ENCODE measurements at regions of chr12 and their contacts with region 1.

Region 1: DNA sequence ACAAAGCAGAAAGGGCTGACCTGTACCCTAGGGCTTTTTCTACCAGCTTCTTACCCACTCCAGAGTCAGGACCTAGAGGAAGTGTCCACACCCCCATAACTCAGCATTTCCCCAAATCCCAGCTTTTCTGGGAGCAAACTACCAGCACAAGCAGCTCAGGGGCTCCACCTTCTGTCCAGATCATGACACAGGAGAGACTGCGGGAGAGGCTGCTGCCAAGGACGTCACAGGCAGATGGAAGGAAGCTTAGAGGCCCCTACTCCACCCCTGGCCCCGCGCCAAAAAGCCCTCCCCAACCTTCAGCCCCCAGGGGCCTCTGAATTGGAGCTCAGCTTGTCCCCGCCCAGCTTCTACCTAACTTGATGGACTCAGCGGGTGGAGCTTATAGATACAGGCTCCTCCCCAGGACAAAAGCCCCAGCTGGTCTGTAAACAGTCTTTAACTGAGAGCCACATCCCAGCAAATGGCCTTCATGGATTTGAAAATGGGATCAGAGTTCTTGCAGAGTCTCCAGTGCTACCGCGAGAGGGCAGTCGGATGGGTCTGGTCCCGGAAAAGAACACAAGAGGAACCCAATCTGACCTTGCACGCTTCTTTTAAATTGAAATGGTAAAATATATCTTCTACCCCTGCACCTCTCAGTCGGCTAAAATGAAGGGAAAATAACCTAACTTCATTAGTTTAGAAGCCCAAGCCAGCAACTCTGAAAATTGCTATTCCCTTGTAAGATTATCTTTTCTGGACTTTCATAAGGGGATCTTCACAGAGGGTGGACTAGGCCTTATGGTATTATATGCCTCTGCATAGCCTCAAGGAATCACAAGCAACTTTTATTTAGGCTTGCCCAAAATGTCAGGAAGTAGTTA is 6.8 kb upstream of the BAZ2A start:
- DNase-seq: peak; percentile 95 to 98 (median 97)
- H3K4me3 ChIP-seq: peak overlapping the region; percentile 91
- H3K4me3 Mint-ChIP-seq: peak overlapping the region; percentile 91 to 99 (median 94)
- H3K27ac ChIP-seq: peak overlapping the region; percentile 89
- H3K27ac Mint-ChIP-seq: peak overlapping the region; percentile 94 to 100 (median 98)
- H3K4me1 ChIP-seq: peaks cover 51% of the 10 kb centered on the region
- H3K4me1 Mint-ChIP-seq: peaks cover 54 to 61% (median 60%) of the 10 kb centered on the region in 3 donors
- H3K27me3 ChIP-seq: no peaks in the 10 kb centered on the region
- H3K27me3 Mint-ChIP-seq: no peaks in the 10 kb centered on the region

Region 2: DNA sequence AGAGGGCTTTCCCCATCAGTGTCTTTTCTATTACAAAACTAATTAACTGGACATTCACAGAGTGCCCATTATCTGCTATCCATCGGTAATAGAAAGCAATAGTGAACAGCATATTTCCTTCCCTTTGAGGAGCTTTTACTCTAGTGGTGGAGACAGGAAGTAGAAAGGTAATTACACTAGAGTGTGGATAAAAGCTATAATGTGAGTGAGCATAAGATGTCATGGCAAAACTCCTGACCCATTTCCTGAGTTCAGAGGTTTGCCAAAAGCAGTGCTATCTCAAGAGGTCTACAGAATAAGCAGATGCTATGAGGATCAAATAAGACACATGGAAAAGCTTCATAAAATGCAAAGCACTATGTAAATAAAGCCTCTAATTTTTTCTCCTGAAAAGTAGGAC is 211.7 kb before region 1 on chr12:
- CTCF ChIA-PET with region 1: no interaction called
- POLR2A ChIA-PET with region 1: no interaction called
- DNase-seq: no peak
- H3K4me3 ChIP-seq: no peak overlapping the region
- H3K4me3 Mint-ChIP-seq: no peak overlapping the region
- H3K27ac ChIP-seq: no peak overlapping the region
- H3K27ac Mint-ChIP-seq: peak overlapping the region in 2 of 8 donors; percentile 1 to 76
- H3K4me1 ChIP-seq: peaks cover 10% of the 10 kb centered on the region
- H3K4me1 Mint-ChIP-seq: peaks cover 4 to 6% (median 6%) of the 10 kb centered on the region in 3 donors
- H3K27me3 ChIP-seq: no peaks in the 10 kb centered on the region
- H3K27me3 Mint-ChIP-seq: no peaks in the 10 kb centered on the region

Region 3: DNA sequence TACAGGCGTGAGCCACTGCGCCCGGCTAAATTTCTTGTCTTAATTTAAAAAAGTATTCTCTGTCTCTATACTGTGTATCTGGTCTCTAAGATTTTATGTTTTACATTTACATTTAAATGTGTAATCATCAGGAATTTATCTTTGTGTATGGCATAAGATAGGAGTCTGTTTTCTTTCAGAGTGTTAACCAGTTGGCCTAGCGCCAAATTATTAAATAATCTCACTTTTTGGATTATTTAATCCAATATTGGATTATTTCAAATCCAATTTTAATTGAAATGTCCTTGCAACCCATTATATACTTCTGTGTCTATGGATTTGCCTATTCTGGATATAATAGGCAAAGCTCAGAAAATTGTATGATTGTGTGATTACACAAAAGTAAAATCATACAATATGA is 51.8 kb before region 1 on chr12:
- CTCF ChIA-PET with region 1: no interaction called
- POLR2A ChIA-PET with region 1: no interaction called
- DNase-seq: no peak
- H3K4me3 ChIP-seq: no peak overlapping the region
- H3K4me3 Mint-ChIP-seq: no peak overlapping the region
- H3K27ac ChIP-seq: no peak overlapping the region
- H3K27ac Mint-ChIP-seq: no peak overlapping the region
- H3K4me1 ChIP-seq: peaks cover 18% of the 10 kb centered on the region
- H3K4me1 Mint-ChIP-seq: peaks cover 17 to 26% (median 18%) of the 10 kb centered on the region in 3 donors
- H3K27me3 ChIP-seq: no peaks in the 10 kb centered on the region
- H3K27me3 Mint-ChIP-seq: no peaks in the 10 kb centered on the region

Region 4: GRCh38 chr12:56601503-56601902 is 35.4 kb before region 1 on chr12:
- CTCF ChIA-PET with region 1: interaction called, 21 read pairs
- POLR2A ChIA-PET with region 1: interaction called, 5 read pairs
- DNase-seq: peak in 3 of 5 donors; percentile 6 to 32 (median 12)
- H3K4me3 ChIP-seq: no peak overlapping the region
- H3K4me3 Mint-ChIP-seq: no peak overlapping the region
- H3K27ac ChIP-seq: no peak overlapping the region
- H3K27ac Mint-ChIP-seq: no peak overlapping the region
- H3K4me1 ChIP-seq: no peaks in the 10 kb centered on the region
- H3K4me1 Mint-ChIP-seq: no peaks in the 10 kb centered on the region
- H3K27me3 ChIP-seq: no peaks in the 10 kb centered on the region
- H3K27me3 Mint-ChIP-seq: no peaks in the 10 kb centered on the region

Region 5: DNA sequence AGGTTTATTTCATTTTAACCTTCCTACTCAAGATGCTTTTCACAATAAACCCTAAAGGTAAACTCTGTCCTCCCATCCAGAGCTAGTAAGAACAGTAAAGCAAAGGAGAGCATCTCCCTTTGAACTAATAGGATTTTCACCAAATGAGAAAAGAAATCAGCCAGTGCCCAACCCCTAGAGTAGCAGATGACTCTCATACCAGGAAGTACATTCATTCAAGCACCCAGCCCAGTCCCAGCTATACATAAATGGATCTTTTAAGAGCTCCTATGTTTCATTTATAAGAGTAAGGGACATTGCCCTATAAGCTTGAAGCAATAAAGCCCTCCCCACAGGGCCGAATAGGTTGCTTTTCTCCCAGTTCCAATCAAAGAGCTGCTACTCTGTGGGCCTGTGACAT is 14.4 kb before region 1 on chr12:
- CTCF ChIA-PET with region 1: interaction called, 50 read pairs
- POLR2A ChIA-PET with region 1: interaction called, 21 read pairs
- DNase-seq: no peak
- H3K4me3 ChIP-seq: no peak overlapping the region
- H3K4me3 Mint-ChIP-seq: no peak overlapping the region
- H3K27ac ChIP-seq: no peak overlapping the region
- H3K27ac Mint-ChIP-seq: peak overlapping the region in 6 of 8 donors; percentile 54 to 70 (median 60)
- H3K4me1 ChIP-seq: peaks cover 38% of the 10 kb centered on the region
- H3K4me1 Mint-ChIP-seq: peaks cover 59 to 81% (median 65%) of the 10 kb centered on the region in 3 donors
- H3K27me3 ChIP-seq: no peaks in the 10 kb centered on the region
- H3K27me3 Mint-ChIP-seq: no peaks in the 10 kb centered on the region

Region 6: GRCh38 chr12:56670836-56671235 is 33.9 kb after region 1 on chr12:
- CTCF ChIA-PET with region 1: interaction called, 10 read pairs
- POLR2A ChIA-PET with region 1: interaction called, 3 read pairs
- DNase-seq: no peak
- H3K4me3 ChIP-seq: no peak overlapping the region
- H3K4me3 Mint-ChIP-seq: no peak overlapping the region
- H3K27ac ChIP-seq: no peak overlapping the region
- H3K27ac Mint-ChIP-seq: peak overlapping the region in 4 of 8 donors; percentile 19 to 76 (median 63)
- H3K4me1 ChIP-seq: peaks cover 18% of the 10 kb centered on the region
- H3K4me1 Mint-ChIP-seq: peaks cover 39 to 54% (median 50%) of the 10 kb centered on the region in 3 donors
- H3K27me3 ChIP-seq: no peaks in the 10 kb centered on the region
- H3K27me3 Mint-ChIP-seq: no peaks in the 10 kb centered on the region

Measured in CD8-positive, alpha-beta memory T cell (primary cell).